Activated CD4-positive, alpha-beta memory T cell treated with anti-CD3 and anti-CD28 coated beads for 36 hours (primary cell): ENCODE measurements at regions of chr1 and their contacts with region 1.

Region 1: DNA sequence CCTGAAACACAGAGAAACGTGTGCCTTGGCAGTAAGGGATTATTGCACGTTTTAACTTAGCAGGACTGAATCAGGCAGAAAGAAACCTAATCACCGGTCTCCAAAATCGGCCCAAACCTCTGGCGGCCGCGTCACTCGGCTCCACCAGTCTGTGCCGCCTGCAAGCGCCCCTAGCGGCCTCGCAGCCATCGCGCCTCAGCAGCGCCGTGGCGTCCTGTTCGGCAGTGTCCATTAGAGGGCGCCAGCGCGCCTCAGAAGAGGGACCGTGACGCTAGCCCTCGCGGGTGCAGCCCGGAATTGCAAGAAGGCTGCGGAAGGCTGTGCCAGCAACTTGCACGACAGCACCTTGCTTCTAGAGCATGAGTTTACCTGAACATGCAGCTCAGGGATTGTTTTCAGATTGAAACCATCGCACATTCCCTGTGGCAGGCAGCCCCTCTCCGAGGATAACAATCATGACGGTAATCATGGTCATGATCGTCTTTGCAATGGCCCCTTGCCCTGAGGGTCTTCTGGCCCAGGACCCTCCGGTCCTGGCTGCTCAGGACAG is 164.4 kb downstream of the TRIM33 start:
- DNase-seq: peak; percentile 98
- H3K4me3 Mint-ChIP-seq: peak overlapping the region; percentile 82
- H3K27ac Mint-ChIP-seq: peak overlapping the region; percentile 84
- H3K4me1 Mint-ChIP-seq: peaks cover 26% of the 10 kb centered on the region
- H3K27me3 Mint-ChIP-seq: no peaks in the 10 kb centered on the region

Region 2: DNA sequence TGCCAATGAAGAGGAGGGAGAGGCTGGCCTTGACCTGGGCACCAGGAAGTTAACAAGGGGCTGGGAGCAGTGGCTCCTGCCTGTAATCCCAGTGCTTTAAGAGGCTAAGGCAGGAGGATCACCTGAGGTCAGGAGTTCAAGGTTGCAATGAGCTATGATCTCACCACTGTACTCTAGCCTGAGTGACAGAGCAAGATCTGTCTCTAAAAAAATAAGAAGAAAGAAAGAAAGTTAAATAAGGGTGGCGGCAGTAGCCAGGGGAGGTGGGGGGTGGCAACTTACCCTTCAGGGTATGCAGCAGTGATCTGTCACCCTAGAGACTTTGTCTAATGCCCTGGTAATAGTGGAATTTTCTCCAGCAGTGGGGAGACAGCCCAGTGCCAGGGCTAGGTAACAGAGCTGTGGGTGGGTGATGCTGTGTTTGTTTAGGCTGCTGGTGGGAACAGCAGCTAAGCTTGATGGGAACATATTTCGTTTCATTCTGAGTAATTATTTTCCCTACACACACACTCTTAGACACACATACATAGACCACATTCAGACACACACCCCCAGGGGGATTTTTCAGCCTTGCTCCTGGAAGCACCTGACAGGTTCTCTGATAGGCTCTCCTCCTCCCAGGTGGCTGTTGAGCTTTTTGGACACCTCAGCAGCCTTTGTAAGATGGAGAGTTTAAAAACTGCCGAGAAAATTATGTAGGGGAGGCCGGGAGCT is 181.6 kb before region 1 on chr1:
- CTCF ChIA-PET with region 1: no interaction called
- POLR2A ChIA-PET with region 1: no interaction called
- intact Hi-C with region 1: no loop called
- DNase-seq: peak; percentile 36
- H3K4me3 Mint-ChIP-seq: no peak overlapping the region
- H3K27ac Mint-ChIP-seq: no peak overlapping the region
- H3K4me1 Mint-ChIP-seq: peaks cover 3% of the 10 kb centered on the region
- H3K27me3 Mint-ChIP-seq: peaks cover 11% of the 10 kb centered on the region

Region 3: GRCh38 chr1:114330451-114330983 is 16.0 kb before region 1 on chr1:
- CTCF ChIA-PET with region 1: interaction called, 15 read pairs
- POLR2A ChIA-PET with region 1: no interaction called
- intact Hi-C with region 1: no loop called
- DNase-seq: peak; percentile 37
- H3K4me3 Mint-ChIP-seq: no peak overlapping the region
- H3K27ac Mint-ChIP-seq: no peak overlapping the region
- H3K4me1 Mint-ChIP-seq: peaks cover 43% of the 10 kb centered on the region
- H3K27me3 Mint-ChIP-seq: no peaks in the 10 kb centered on the region

Region 4: GRCh38 chr1:114428083-114428749 is 81.7 kb after region 1 on chr1:
- CTCF ChIA-PET with region 1: interaction called, 19 read pairs
- POLR2A ChIA-PET with region 1: no interaction called
- intact Hi-C with region 1: loop called (anchors 1 kb)
- DNase-seq: no peak
- H3K4me3 Mint-ChIP-seq: no peak overlapping the region
- H3K27ac Mint-ChIP-seq: no peak overlapping the region
- H3K4me1 Mint-ChIP-seq: no peaks in the 10 kb centered on the region
- H3K27me3 Mint-ChIP-seq: no peaks in the 10 kb centered on the region

Region 5: GRCh38 chr1:114558544-114558943 is 212.0 kb after region 1 on chr1:
- CTCF ChIA-PET with region 1: interaction called, 7 read pairs
- POLR2A ChIA-PET with region 1: no interaction called
- intact Hi-C with region 1: loop called (anchors 5 kb)
- DNase-seq: no peak
- H3K4me3 Mint-ChIP-seq: no peak overlapping the region
- H3K27ac Mint-ChIP-seq: no peak overlapping the region
- H3K4me1 Mint-ChIP-seq: no peaks in the 10 kb centered on the region
- H3K27me3 Mint-ChIP-seq: no peaks in the 10 kb centered on the region

Region 6: GRCh38 chr1:114670083-114671010 is 323.8 kb after region 1 on chr1:
- CTCF ChIA-PET with region 1: interaction called, 3 read pairs
- POLR2A ChIA-PET with region 1: no interaction called
- intact Hi-C with region 1: loop called (anchors 1 kb)
- DNase-seq: peak; percentile 92
- H3K4me3 Mint-ChIP-seq: peak overlapping the region; percentile 88
- H3K27ac Mint-ChIP-seq: no peak overlapping the region
- H3K4me1 Mint-ChIP-seq: peaks cover 7% of the 10 kb centered on the region
- H3K27me3 Mint-ChIP-seq: peaks cover 2% of the 10 kb centered on the region

Region 7: DNA sequence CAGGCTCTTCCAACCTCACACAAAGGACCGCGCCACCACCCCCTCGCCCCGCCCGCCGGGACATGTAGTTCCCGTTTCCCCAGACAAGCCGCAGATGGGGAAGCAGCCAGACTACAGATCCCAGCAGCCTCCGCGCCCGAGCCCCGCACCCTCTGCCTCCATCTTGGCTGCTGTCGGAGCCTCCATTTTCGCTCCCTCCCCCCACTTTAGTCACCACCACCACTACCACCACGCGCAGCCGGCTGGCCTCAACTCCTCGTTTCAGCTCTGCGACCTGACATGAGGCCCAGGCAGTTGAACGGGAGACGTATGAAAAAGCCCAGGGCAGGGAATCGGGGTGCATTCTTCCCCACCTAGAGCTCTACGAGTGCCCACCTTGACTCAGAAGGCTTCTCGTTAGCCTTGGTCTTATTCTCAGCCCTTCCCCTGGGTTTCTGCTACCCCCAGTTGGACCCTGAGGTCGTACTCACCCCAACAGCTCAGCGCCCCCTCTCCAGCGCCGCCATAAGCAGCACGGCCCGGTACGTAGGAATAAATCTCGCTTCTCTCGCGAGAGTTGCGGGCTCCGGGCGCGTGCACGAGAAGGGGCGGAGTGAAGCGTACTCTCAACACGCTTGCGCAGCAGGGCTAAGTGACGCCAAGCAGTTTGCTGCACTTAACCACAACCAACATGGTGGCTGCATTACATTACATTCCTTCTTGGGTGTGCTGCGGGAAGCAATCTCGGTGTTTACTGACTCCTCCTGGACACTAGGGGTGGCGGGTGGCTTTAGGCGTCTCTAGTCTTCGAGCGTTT is 411.1 kb after region 1 on chr1 and contains the start of gene CSDE1:
- CTCF ChIA-PET with region 1: no interaction called
- POLR2A ChIA-PET with region 1: no interaction called
- intact Hi-C with region 1: loop called (anchors 5 kb)
- DNase-seq: peak; percentile 98
- H3K4me3 Mint-ChIP-seq: peak within 1 kb of the TSS; percentile 98
- H3K27ac Mint-ChIP-seq: peak within 1 kb of the TSS; percentile 100
- H3K4me1 Mint-ChIP-seq: peaks cover 47% of the 10 kb centered on the region
- H3K27me3 Mint-ChIP-seq: no peaks in the 10 kb centered on the region
- total RNA-seq, gene CSDE1: 452 to 464 TPM

Region 8: GRCh38 chr1:114979278-114979891 is 632.8 kb after region 1 on chr1:
- CTCF ChIA-PET with region 1: no interaction called
- POLR2A ChIA-PET with region 1: no interaction called
- intact Hi-C with region 1: no loop called
- DNase-seq: peak; percentile 72
- H3K4me3 Mint-ChIP-seq: no peak overlapping the region
- H3K27ac Mint-ChIP-seq: no peak overlapping the region
- H3K4me1 Mint-ChIP-seq: no peaks in the 10 kb centered on the region
- H3K27me3 Mint-ChIP-seq: peaks cover 10% of the 10 kb centered on the region

Region 9: GRCh38 chr1:115098979-115099692 is 752.6 kb after region 1 on chr1:
- CTCF ChIA-PET with region 1: no interaction called
- POLR2A ChIA-PET with region 1: no interaction called
- intact Hi-C with region 1: loop called (anchors 10 kb)
- DNase-seq: peak; percentile 78
- H3K4me3 Mint-ChIP-seq: peak overlapping the region; percentile 80
- H3K27ac Mint-ChIP-seq: peak overlapping the region; percentile 85
- H3K4me1 Mint-ChIP-seq: peaks cover 47% of the 10 kb centered on the region
- H3K27me3 Mint-ChIP-seq: no peaks in the 10 kb centered on the region